ENCODE measurements at regions of chr1 and their contacts with region 1.

Region 1: DNA sequence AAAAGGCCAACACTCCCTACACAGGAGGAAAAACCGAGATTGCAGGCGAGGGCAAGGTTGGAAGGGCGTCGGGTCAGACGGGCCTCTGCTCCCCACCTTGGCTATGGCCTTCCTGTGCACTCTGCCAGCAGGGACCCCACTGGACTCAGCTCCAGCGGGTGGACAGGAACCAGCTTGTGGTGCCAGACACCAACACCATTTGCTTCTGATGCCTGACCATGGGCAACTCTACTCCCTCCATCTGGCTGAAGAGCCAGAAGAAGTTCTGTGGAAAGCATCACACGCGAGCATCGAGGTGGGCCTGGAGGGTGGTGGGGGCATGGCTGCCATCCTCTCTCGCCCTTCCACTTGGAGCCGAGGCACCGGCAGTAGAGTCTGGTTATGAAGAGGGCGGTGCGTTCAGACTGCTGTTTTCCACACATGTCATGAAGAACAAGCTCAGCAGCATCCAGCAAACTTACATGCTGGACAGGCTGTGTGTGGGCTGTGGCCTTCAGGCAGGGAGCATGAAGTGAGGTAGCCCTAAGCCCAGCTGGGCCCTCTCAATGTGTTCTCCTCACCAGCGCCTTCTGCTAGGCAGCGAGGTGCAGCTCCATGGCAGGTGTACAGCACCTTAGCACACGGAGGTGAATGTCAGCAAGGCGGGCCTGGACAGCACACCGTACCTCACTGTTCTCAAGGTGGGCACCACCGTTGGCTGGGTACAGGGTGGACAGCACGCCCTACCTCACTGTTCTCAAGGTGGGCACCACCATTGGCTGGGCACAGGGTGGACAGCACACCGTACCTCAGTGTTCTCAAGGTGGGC is 15.6 kb upstream of the ZNF669 start:
- DNase-seq: no peak
- ATAC-seq: peak in 1 of 4 donors; percentile 15
- H3K4me3 ChIP-seq: no peak overlapping the region
- H3K27ac ChIP-seq: no peak overlapping the region
- H3K4me1 ChIP-seq: no peaks in the 10 kb centered on the region
- H3K27me3 ChIP-seq: no peaks in the 10 kb centered on the region
- CTCF ChIP-seq: no peak
- POLR2A ChIP-seq: no peak

Region 2: GRCh38 chr1:247043406-247043805 is 76.4 kb before region 1 on chr1:
- intact Hi-C with region 1: no loop called
- DNase-seq: no peak
- ATAC-seq: no peak
- H3K4me3 ChIP-seq: no peak overlapping the region
- H3K27ac ChIP-seq: no peak overlapping the region
- H3K4me1 ChIP-seq: no peaks in the 10 kb centered on the region
- H3K27me3 ChIP-seq: no peaks in the 10 kb centered on the region
- CTCF ChIP-seq: peak in 8 of 12 donors; percentile 11 to 51 (median 30)
- POLR2A ChIP-seq: no peak

Region 3: DNA sequence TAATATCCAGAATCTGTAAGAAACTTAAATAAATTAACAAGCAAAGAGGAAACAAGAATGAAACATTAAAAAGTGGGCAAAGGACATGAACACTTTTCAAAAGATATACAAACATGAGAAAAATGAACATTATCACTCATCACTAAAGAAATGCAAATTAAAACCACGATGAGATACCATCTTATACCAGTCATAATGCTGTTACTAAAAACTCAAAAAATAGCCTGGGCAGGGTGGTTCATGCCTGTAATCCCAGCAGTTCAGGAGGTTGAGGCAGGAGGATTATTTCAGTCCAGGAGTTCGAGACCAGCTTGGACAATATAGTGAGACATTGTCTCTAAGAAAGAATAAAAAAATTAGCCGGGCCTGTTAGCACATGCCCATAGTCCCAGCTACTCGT is 45.9 kb after region 1 on chr1:
- intact Hi-C with region 1: loop called in 3 of 10 experiments (anchors 5 to 10 kb)
- DNase-seq: no peak
- ATAC-seq: no peak
- H3K4me3 ChIP-seq: no peak overlapping the region
- H3K27ac ChIP-seq: no peak overlapping the region
- H3K4me1 ChIP-seq: no peaks in the 10 kb centered on the region
- H3K27me3 ChIP-seq: no peaks in the 10 kb centered on the region
- CTCF ChIP-seq: no peak
- POLR2A ChIP-seq: no peak

Region 4: DNA sequence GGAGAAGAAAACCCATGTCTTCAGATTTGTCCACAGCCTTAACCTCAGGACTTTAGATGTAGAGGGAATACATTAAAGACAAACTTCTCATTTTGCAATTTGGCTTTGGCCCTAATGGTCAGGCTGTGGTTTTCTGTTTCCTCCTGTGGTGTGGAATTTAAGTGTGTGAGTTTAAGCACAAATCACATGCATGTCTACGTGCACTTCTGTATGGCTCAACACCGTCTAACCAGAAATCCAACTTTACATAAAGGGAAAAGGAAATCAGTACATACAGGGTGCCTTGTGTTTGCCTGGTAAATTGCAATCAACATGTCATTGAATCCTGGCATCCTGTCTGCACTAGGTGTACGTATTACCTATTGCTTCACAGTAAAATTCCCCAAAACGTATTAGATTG is 53.2 kb after region 1 on chr1:
- intact Hi-C with region 1: loop called in 3 of 10 experiments (anchors 5 to 10 kb)
- DNase-seq: no peak
- ATAC-seq: no peak
- H3K4me3 ChIP-seq: no peak overlapping the region
- H3K27ac ChIP-seq: peak overlapping the region in 1 of 12 donors; percentile 6
- H3K4me1 ChIP-seq: peaks cover 0 to 14% (median 0%) of the 10 kb centered on the region in 12 donors
- H3K27me3 ChIP-seq: no peaks in the 10 kb centered on the region
- CTCF ChIP-seq: no peak
- POLR2A ChIP-seq: no peak

Measured in heart left ventricle (tissue), 16 donors.